Activated B cell treated with CpG ODN at 0.5 μM for 24 hours (primary cell): ENCODE measurements at regions of chr14 and their contacts with region 1.

Region 1: DNA sequence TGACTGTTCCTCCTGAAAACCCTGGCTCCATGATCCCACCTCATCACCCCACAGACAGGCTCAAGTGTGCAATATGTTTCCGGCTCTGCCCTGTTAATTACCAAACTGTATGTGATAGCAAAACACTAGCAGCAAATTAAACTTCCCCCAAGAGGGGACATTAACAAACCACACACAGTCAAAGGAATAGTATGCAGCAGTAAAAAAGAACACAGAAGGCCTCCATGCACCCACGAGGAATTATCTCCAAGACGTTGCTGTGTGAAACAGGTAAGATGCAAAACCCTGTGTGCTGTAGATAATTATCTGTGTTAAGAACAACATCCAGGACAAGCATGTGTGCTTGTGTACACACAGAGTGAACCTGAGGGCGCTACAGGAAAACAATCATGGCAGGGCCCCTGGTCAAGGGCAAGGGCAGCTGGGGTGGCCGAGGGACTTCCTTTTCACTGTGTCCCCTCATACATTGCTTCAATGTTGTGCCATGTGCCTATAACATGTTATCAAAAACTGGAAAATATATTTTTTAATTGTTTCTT is 35.8 kb downstream of the ITPK1 start:
- DNase-seq: no peak
- ATAC-seq: no peak
- H3K4me3 Mint-ChIP-seq: no peak overlapping the region
- H3K27ac Mint-ChIP-seq: no peak overlapping the region
- H3K4me1 Mint-ChIP-seq: peaks cover 56% of the 10 kb centered on the region
- H3K27me3 Mint-ChIP-seq: no peaks in the 10 kb centered on the region
- CTCF ChIP-seq: no peak

Region 2: GRCh38 chr14:93054006-93054405 is 25.9 kb before region 1 on chr14:
- CTCF ChIA-PET with region 1: no interaction called
- POLR2A ChIA-PET with region 1: no interaction called
- intact Hi-C with region 1: no loop called
- DNase-seq: no peak
- ATAC-seq: peak; percentile 73
- H3K4me3 Mint-ChIP-seq: no peak overlapping the region
- H3K27ac Mint-ChIP-seq: no peak overlapping the region
- H3K4me1 Mint-ChIP-seq: peaks cover 17% of the 10 kb centered on the region
- H3K27me3 Mint-ChIP-seq: no peaks in the 10 kb centered on the region
- CTCF ChIP-seq: no peak

Region 3: DNA sequence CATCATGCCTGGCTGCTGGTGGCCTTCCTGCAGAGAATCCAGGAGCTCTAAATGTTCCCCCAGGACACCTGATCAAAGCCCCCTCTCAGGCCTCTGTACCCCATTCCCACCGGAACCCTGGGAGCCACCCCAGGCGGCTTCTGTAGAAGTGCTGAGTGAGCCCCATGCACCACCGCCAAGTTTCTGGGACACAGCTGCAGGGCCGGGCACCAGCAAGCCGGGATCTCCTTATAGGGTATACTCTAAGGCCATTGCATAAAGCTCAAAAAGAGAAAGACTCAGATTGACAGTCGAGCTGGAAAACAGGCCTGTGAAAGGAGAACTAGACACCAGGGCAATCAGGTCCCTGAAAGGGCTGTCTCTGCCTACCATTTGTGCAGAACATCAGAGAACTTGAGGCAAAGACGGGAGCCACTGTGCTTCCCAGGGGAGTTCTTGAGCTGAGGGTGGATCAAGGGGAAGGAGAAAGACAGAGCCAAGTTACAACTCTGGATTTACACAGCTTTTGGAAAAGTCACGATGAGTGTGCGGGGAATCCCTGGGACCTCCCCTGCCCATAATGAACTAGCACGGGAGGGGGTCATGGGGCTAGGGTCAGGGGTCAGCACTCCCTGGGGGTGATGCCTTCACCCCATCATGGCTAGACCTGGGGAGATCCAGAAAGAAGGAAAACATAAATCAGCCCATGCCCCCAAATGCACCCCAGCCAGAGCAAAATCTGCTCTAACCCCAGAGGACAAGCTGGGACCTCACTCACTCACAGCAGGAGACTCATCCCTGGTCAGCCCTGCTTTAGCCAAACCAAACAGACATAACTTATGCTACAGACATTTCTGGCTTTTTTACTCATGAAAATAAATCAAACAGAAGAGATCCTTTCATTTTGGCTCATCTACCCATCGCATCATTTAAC is 15.3 kb before region 1 on chr14:
- CTCF ChIA-PET with region 1: no interaction called
- POLR2A ChIA-PET with region 1: no interaction called
- intact Hi-C with region 1: loop called (anchors 1 kb)
- DNase-seq: no peak
- ATAC-seq: no peak
- H3K4me3 Mint-ChIP-seq: no peak overlapping the region
- H3K27ac Mint-ChIP-seq: peak overlapping the region; percentile 61
- H3K4me1 Mint-ChIP-seq: peaks cover 69% of the 10 kb centered on the region
- H3K27me3 Mint-ChIP-seq: no peaks in the 10 kb centered on the region
- CTCF ChIP-seq: no peak